ENCODE measurements at regions of chr7 and their contacts with region 1.

Region 1: DNA sequence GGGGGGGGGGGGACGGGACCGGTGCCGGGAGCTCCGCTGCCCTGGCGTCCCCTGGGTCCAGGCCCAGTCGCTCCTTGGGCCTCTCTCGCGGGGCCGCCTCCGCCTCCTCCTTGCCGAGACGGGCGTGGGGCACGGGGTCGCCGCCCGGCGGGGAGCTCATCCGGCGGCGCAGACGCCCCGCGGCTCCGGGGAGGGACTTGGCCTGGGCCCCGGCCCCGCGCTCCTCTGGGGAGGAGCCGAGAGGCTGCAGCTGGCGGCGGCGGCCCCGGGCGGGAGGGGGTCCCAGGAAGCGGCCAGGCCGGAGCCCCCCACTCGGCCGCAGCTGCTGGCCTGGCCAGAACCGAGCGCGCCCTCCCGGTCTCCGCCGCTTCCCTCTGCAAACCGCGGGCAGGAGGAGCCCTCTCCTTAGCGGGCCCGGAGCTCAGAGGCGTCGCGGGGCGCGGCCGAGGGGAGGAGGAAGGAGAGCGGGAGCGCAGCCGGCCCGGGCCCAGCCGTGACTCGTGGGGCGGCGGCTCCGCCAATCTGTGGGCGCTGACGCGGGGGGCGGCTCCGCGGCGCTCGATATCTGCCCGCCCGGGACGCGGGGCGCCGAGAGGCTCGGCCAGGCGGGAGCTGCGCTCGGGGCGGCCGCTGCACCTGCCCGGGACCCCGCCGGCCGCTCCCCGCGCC is at the start of gene FAM20C:
- DNase-seq: peak; percentile 83
- H3K4me3 ChIP-seq: peak within 1 kb of the TSS; percentile 54 to 74 (median 59)
- H3K27ac ChIP-seq: peak within 1 kb of the TSS; percentile 86 to 91 (median 88)
- H3K4me1 ChIP-seq: peaks cover 0 to 41% (median 25%) of the 10 kb centered on the region in 4 donors
- H3K27me3 ChIP-seq: peaks cover 16% of the 10 kb centered on the region
- CTCF ChIP-seq: no peak
- EP300 ChIP-seq: no peak
- POLR2A ChIP-seq: peak; percentile 46
- total RNA-seq, gene FAM20C: 10.5 to 62.3 (median 23.5) TPM

Region 2: DNA sequence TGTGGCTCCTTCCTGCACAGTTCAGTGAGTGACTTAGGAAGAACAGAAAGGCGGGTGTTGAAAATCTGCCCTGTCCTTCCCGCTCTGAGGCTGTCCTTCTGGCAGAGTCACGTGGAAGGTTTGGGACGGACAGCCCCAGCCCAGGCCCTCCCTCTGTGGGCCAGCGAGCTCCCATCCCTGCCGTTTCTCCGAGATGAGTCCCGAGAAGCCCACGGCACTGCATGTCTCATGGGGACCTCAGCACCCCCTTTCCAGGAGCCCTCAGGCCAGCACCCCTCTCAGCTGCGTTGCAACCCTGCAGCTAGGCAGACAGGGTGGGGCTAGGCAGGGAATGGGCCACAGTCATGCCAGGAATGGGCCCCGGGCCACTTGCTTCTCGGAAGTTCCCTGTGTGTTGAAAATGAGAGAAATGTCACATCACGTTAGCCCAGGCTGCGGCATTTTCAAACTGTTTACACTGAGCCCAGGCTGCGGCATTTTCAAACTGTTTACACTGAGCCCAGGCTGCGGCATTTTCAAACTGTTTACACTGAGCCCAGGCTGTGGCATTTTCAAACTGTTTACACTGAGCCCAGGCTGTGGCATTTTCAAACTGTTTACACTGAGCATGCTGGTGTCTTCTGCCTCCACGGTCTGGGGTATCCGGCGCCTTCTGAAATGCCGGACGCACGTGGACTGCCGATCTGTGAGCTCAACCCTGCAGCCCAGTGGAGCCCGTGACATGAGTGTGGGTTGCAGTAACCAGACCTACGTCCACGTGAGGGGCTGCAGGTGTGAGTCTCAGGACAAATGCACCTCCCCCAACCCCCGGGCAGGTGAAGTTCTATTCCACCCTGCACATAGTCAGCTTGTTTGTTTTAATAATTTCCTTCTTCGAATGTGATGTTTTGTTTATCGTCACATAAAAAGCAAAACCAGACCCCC is 42.8 kb after region 1 on chr7:
- in situ Hi-C with region 1: no loop called
- intact Hi-C with region 1: loop called (anchors 5 kb)
- DNase-seq: peak; percentile 37
- H3K4me3 ChIP-seq: no peak overlapping the region
- H3K27ac ChIP-seq: peak overlapping the region; percentile 83 to 92 (median 86)
- H3K4me1 ChIP-seq: peaks cover 34 to 62% (median 49%) of the 10 kb centered on the region in 4 donors
- H3K27me3 ChIP-seq: no peaks in the 10 kb centered on the region
- CTCF ChIP-seq: no peak
- EP300 ChIP-seq: peak; percentile 44
- POLR2A ChIP-seq: no peak

Measured in transverse colon (tissue), 4 donors.